BJ (cell line): ENCODE measurements at regions of chr1 and their contacts with region 1.

Region 1: DNA sequence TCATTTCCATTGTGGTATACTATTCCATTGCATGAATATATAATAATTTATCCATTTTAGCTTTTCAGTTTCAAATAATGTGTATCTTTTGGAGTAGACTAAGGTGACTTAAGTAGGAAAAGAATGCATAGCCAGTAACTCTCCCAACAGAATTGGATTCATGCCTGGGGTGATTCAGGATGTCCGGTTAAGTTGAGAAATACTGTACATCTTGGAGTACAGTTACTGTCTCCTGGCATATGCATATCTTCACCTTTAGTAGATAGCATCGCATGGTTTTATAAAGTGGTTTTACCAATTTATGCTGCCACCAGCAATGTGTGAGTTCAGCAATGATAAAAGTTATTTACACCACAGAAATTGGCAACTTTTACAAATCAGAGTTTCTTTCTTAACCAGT is 18.6 kb upstream of the SLC6A9 start:
- DNase-seq: peak; percentile 87
- H3K4me3 ChIP-seq: no peak overlapping the region
- H3K27me3 ChIP-seq: no peaks in the 10 kb centered on the region
- CTCF ChIP-seq: no peak

Region 2: GRCh38 chr1:43991476-43992231 is 58.2 kb before region 1 on chr1 and contains the start of gene CCDC24:
- CTCF ChIA-PET with region 1: interaction called, 197 read pairs
- POLR2A ChIA-PET with region 1: interaction called, 9 read pairs
- DNase-seq: peak; percentile 40
- H3K4me3 ChIP-seq: peak within 1 kb of the TSS; percentile 68
- H3K27me3 ChIP-seq: no peaks in the 10 kb centered on the region
- CTCF ChIP-seq: no peak
- polyA plus RNA-seq, gene CCDC24: 0.98 and 2.0 TPM in 2 replicates

Region 3: DNA sequence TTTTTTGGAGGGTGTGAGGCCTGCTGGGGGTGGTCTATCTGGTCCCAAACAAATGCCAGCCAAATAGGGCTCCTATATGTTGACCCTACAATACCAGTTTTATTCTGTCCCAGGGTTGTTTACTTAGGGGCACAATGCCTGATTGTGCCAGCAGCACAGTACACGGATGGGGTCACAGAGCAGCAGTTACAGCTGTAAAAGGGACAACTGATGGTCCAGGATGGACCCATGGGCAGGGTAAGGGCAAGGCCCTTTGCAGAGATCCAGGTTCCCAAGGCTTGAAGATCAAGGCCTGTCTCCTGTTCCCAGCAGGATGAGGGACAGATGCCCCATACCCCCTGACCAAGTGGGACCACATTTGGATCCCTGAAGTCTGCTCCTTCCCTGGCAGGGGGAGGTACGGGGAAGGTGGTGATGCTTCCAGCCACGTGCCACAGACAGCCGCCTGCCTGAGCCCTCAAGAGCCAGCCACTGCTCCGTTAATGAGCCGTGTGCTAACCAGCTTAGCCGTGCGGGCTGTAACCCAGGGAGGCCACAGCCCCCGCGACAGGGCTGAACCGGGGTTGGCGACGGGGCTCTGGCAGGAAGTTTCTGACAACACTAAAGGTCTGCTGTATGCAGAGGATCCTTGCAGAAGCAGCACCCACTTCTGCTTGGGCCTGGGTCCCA is 36.8 kb before region 1 on chr1:
- CTCF ChIA-PET with region 1: interaction called, 17 read pairs
- POLR2A ChIA-PET with region 1: no interaction called
- DNase-seq: no peak
- H3K4me3 ChIP-seq: no peak overlapping the region
- H3K27me3 ChIP-seq: no peaks in the 10 kb centered on the region
- CTCF ChIP-seq: no peak

Region 4: GRCh38 chr1:44036409-44037139 is 13.3 kb before region 1 on chr1:
- CTCF ChIA-PET with region 1: interaction called, 49 read pairs
- POLR2A ChIA-PET with region 1: interaction called, 3 read pairs
- DNase-seq: no peak
- H3K4me3 ChIP-seq: no peak overlapping the region
- H3K27me3 ChIP-seq: no peaks in the 10 kb centered on the region
- CTCF ChIP-seq: peak; percentile 80